Activated T-helper 1 cell treated with anti-CD3 and anti-CD28 coated beads, Interleukin-12 subunit alpha, Interleukin-12 subunit beta, Interleukin-2, Interleukin-4 antibody, amounts not matched to agents 30 ng/mL and 10 ng/mL and 1 ng/mL, durations not matched to agents 14 hours and 24 hours and 36 hours (primary cell): ENCODE measurements at regions of chr3 and their contacts with region 1.

Region 1: DNA sequence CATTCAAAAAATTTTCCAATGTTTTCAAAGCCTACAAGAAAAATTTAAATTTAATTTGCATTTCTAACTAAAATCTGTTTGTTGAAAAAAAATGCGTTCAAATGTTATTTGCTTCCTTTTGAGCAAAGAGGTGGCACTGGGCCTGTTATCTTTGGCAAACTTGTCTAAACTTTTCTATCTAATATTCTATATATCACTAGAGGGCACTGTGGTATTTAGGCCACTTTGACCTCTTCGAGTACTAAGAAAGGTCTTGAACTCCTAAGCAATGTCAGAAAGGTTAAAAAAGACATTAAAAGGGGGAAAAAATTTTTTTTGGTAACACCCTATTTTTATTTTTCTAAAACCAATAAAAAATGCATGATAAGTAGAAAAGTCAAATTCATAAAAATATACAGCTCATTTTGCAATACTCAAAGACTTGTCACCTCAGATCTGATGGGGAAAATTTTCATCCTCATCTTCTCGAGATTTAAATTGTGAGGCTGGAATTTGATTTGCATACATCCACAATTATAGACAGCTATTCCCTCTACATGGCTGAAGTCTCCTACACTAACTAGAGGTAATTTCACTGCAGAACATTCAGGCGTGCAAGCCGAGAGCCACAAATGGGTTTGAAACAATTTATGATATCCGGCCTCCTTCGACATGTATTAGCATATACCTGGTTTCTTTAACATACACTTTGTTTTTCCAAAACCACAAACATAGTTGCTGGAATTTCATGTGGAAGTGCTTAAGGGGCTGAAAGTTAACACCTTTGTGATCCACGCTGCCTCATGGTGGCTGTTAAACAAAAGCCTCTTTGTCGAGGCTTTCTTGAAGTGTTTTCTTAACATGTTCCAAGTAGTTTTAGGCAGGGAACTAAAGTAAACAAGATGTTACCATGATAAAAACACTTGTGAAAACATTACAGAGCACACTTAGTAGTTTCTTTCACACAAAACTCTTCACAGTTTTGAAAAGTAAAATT is 576.4 kb downstream of the FOXP1 start:
- DNase-seq: no peak
- H3K4me3 Mint-ChIP-seq: no peak overlapping the region
- H3K27ac Mint-ChIP-seq: no peak overlapping the region
- H3K4me1 Mint-ChIP-seq: peaks cover 59% of the 10 kb centered on the region
- H3K27me3 Mint-ChIP-seq: no peaks in the 10 kb centered on the region

Region 2: DNA sequence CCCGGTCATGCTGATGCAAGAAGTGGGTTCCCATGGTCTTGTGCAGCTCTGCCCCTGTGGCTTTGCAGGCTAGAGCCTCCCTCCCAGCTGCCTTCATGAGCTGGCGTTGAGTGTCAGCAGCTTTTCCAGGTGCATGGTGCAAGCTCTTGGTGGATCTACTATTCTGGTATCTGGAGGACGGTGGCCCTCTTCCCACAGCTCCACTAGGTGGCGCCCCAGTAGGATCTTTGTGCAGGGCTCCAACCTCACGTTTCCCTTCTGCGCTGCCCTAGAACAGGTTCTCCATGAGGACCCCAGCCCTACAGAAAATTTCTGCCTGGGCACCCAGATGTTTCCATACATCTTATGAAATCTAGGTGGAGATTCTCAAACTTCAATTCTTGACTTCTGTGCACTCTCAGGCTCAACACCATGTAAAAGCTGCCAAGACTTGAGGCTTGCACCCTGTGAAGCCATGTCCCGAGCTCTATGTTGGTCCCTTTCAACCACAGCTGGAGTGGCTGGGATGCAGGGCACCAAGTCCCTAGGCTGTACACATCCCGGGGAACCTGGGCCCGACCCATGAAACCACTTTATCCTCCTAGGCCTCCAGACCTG is 456.3 kb before region 1 on chr3:
- intact Hi-C with region 1: loop called (anchors 10 kb)
- DNase-seq: peak; percentile 34
- H3K4me3 Mint-ChIP-seq: no peak overlapping the region
- H3K27ac Mint-ChIP-seq: no peak overlapping the region
- H3K4me1 Mint-ChIP-seq: no peaks in the 10 kb centered on the region
- H3K27me3 Mint-ChIP-seq: peaks cover 17% of the 10 kb centered on the region

Region 3: DNA sequence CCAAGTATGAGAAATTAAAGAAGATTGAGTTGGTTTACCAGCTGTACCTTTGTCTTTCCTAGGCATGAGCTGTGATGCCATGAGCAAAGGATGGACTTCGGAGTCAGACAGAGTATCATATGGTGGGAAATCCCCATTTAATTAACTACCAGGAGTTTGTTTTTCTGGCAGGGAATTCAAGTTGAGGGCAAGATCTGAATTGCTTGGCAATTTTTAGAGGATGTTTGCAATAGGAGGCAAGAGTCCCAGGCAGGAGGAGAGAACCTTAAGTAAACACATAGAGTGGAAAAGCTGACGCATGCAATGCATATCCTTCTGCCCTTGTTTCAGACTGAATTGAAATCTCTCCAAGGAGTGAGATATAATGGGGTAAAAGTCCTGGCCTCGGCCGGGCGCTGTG is 125.0 kb before region 1 on chr3:
- intact Hi-C with region 1: no loop called
- DNase-seq: no peak
- H3K4me3 Mint-ChIP-seq: no peak overlapping the region
- H3K27ac Mint-ChIP-seq: no peak overlapping the region
- H3K4me1 Mint-ChIP-seq: no peaks in the 10 kb centered on the region
- H3K27me3 Mint-ChIP-seq: no peaks in the 10 kb centered on the region

Region 4: GRCh38 chr3:70990723-70991122 is 16.4 kb before region 1 on chr3:
- intact Hi-C with region 1: loop called (anchors 2 kb)
- DNase-seq: no peak
- H3K4me3 Mint-ChIP-seq: no peak overlapping the region
- H3K27ac Mint-ChIP-seq: no peak overlapping the region
- H3K4me1 Mint-ChIP-seq: peaks cover 24% of the 10 kb centered on the region
- H3K27me3 Mint-ChIP-seq: no peaks in the 10 kb centered on the region

Region 5: DNA sequence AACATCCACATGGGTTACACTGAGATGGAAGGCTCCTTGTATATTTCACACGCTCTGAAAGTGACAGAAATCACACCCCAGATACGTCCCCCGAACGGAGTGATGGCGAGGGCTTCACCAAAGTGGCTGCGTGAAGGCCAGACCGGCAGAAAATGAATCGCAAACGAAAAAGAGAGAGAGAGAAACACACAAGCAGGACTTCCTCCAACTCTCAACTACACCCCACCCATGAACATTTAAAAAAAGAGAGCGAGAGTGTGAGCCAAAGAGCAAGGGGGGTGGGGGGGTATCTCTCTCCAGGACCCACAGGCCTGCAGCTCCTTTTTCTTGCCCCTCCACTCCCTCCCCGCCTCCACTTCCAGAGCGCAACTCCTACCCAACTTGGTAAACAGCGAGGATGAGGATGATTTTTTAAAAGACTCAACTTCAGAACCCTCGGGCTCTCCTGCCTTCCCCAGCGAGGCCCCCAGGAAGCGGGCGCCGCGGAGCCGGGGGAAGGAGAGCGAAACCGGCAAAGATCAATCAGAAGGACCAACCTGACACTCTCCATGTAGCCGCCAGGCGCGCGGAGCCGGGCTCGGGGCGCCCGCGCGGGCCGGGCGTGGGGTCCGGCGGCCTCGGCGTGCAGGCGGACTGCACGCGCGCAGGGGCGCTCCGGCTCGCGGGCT is 57.3 kb after region 1 on chr3:
- intact Hi-C with region 1: loop called (anchors 1 kb)
- DNase-seq: peak; percentile 59
- H3K4me3 Mint-ChIP-seq: no peak overlapping the region
- H3K27ac Mint-ChIP-seq: no peak overlapping the region
- H3K4me1 Mint-ChIP-seq: peaks cover 39% of the 10 kb centered on the region
- H3K27me3 Mint-ChIP-seq: no peaks in the 10 kb centered on the region

Region 6: GRCh38 chr3:71185733-71186455 is 178.8 kb after region 1 on chr3:
- intact Hi-C with region 1: loop called (anchors 1 kb)
- DNase-seq: no peak
- H3K4me3 Mint-ChIP-seq: no peak overlapping the region
- H3K27ac Mint-ChIP-seq: no peak overlapping the region
- H3K4me1 Mint-ChIP-seq: peaks cover 15% of the 10 kb centered on the region
- H3K27me3 Mint-ChIP-seq: peaks cover 2% of the 10 kb centered on the region

Region 7: GRCh38 chr3:71444028-71444860 is 437.1 kb after region 1 on chr3:
- intact Hi-C with region 1: loop called (anchors 5 kb)
- DNase-seq: peak; percentile 71
- H3K4me3 Mint-ChIP-seq: peak overlapping the region; percentile 74
- H3K27ac Mint-ChIP-seq: peak overlapping the region; percentile 95
- H3K4me1 Mint-ChIP-seq: peaks cover 73% of the 10 kb centered on the region
- H3K27me3 Mint-ChIP-seq: peaks cover 8% of the 10 kb centered on the region

Region 8: GRCh38 chr3:71583566-71584449 is 576.7 kb after region 1 on chr3 and contains the start of gene FOXP1:
- intact Hi-C with region 1: loop called (anchors 1 kb)
- DNase-seq: peak; percentile 37
- H3K4me3 Mint-ChIP-seq: peak within 1 kb of the TSS; percentile 90
- H3K27ac Mint-ChIP-seq: peak within 1 kb of the TSS; percentile 93
- H3K4me1 Mint-ChIP-seq: peaks cover 47% of the 10 kb centered on the region
- H3K27me3 Mint-ChIP-seq: peaks cover 31% of the 10 kb centered on the region
- total RNA-seq, gene FOXP1: 94.8 and 97.6 TPM in 2 replicates